Calu3 (cell line): ENCODE measurements at regions of chr9 and their contacts with region 1.

Region 1: GRCh38 chr9:4984621-4985385 is at the start of gene JAK2:
- DNase-seq: peak; percentile 89
- H3K4me3 Mint-ChIP-seq: peak within 1 kb of the TSS; percentile 96
- H3K27ac Mint-ChIP-seq: peak within 1 kb of the TSS; percentile 95
- H3K4me1 Mint-ChIP-seq: peaks cover 28% of the 10 kb centered on the region
- H3K27me3 Mint-ChIP-seq: no peaks in the 10 kb centered on the region
- CTCF ChIP-seq: peak; percentile 24
- total RNA-seq, gene JAK2: 6.3 and 9.2 TPM in 2 replicates

Region 2: DNA sequence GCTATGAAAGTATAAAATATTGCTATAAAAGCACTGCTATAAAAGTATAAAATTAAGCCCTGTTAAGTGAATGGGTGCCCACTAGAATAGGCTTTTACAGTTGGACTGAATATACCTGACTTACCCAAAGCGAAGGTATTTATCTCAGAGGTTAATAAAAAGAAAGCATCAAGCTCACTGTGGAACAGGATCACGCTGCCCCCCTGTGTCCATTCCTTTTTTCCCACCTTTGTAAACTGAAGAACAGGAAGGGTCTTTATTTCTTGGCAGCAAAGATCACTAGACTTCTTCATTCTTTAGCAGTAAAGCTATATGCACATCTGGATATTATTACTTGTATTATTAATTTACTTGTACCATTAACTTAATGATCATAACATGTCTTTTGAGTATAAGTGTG is 344.8 kb before region 1 on chr9:
- CTCF ChIA-PET with region 1: no interaction called
- intact Hi-C with region 1: no loop called
- DNase-seq: peak; percentile 48
- H3K4me3 Mint-ChIP-seq: no peak overlapping the region
- H3K27ac Mint-ChIP-seq: no peak overlapping the region
- H3K4me1 Mint-ChIP-seq: no peaks in the 10 kb centered on the region
- H3K27me3 Mint-ChIP-seq: no peaks in the 10 kb centered on the region
- CTCF ChIP-seq: peak; percentile 35

Region 3: DNA sequence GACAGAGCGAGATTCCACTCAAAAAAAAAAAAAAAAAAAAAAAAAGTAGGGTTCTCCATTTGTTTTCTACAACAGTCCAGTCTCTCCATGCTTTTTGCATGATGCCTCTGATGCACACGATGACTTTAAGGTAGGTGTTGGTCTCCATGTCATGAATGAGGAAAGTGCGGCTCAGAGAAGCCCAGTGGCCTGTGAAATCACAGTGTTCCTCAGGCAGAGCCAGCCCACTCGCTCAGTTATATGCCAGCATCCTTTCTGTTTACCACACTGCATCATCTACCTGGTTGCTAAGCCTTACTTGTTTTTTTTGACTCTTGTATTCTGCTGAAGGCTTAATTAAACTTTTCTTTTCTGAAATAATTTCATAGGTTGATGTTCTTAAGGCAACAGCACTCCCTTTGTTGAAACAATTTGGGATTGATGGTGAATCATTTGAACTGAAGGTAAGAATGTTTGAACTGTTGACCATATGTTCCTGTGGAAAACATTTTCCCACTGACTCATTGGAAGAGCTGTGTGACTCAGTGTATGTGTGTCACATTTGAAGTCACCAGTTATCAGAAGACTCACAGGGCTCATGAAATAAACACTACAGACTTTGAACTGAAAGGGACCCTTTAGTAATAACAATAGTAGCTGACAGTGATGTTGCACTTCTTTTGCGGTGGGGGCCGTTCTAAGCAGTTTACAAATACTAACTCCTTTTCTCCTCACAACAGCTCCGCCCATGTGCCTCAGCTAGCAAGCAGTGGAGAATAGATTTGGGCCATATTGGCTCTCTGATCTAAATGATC is 151.8 kb before region 1 on chr9:
- CTCF ChIA-PET with region 1: no interaction called
- intact Hi-C with region 1: loop called (anchors 5 kb)
- DNase-seq: peak; percentile 10
- H3K4me3 Mint-ChIP-seq: no peak overlapping the region
- H3K27ac Mint-ChIP-seq: peak overlapping the region; percentile 85
- H3K4me1 Mint-ChIP-seq: peaks cover 23% of the 10 kb centered on the region
- H3K27me3 Mint-ChIP-seq: no peaks in the 10 kb centered on the region
- CTCF ChIP-seq: no peak

Region 4: DNA sequence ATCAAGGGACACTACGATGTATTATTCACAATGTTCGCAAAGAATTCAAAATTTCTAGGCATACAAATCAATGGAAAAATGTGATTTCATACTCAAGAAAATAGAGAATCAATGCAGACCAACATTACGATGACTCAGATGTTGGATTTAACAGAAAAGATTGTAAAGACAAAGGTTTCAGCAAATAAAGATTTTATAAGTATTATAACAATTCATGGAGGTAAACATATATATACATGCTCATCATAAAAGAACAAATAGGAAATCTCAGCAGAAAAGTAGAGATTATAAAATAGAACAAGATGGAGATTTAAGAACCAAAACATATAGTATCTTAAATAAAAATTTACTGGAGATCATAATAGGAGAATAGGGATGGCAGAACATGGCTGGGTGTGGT is 93.1 kb before region 1 on chr9:
- CTCF ChIA-PET with region 1: no interaction called
- intact Hi-C with region 1: loop called (anchors 2 kb)
- DNase-seq: no peak
- H3K4me3 Mint-ChIP-seq: no peak overlapping the region
- H3K27ac Mint-ChIP-seq: no peak overlapping the region
- H3K4me1 Mint-ChIP-seq: peaks cover 29% of the 10 kb centered on the region
- H3K27me3 Mint-ChIP-seq: no peaks in the 10 kb centered on the region
- CTCF ChIP-seq: no peak